ENCODE measurements at regions of chr11 and their contacts with region 1.

Region 1: DNA sequence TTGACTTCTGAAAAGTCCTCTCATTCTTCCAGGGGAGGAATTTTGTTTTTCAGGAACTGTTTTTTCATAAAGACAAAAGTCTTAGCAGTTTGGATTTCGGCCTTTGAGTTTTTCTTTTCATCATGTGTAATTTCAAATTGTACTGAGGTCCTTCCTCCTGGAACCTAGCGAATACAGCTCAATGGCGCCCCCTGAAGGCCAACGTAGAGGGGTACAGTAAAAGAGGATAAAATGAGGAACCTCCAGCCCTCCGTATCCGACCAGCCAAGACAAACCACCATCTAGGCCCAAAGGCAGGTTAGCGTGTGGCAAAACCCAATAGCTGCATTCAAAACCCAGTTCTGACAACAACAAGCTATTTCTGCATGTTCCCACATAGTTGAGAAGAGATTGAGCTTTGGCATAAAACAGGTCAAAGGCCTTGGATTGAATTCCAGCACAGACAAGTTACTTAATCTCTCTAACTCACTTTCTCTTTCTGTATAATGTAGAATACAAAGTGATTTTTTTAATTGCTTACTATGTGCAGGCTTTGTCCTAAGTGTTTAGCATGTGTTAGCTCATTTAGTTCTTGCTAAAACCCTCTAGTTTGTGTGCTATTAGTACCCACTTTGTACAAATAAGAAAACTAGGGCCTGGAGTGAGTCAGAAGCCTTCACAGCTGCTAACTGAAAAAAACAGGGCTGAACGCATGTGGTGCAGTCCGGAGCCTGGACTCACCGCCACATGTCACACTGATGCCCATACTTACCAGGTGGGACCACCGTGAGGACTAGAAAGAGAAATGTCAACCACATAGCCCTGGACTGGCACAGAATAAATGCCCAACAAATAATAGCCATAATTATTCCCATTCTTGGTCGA is 43.2 kb upstream of the ETS1 start:
- DNase-seq: peak; percentile 89 to 93
- ATAC-seq: peak; percentile 89 to 98 (median 92)
- H3K4me3 ChIP-seq: no peak overlapping the region
- H3K27ac ChIP-seq: no peak overlapping the region
- H3K4me1 ChIP-seq: peaks cover 10% of the 10 kb centered on the region
- H3K27me3 ChIP-seq: no peaks in the 10 kb centered on the region
- CTCF ChIP-seq: peak; percentile 92

Region 2: GRCh38 chr11:127993788-127994187 is 636.8 kb before region 1 on chr11:
- intact Hi-C with region 1: no loop called
- DNase-seq: no peak
- ATAC-seq: no peak
- H3K4me3 ChIP-seq: no peak overlapping the region
- H3K27ac ChIP-seq: no peak overlapping the region
- H3K4me1 ChIP-seq: no peaks in the 10 kb centered on the region
- H3K27me3 ChIP-seq: peaks cover 0 to 3% (median 2%) of the 10 kb centered on the region in 3 donors
- CTCF ChIP-seq: no peak

Region 3: DNA sequence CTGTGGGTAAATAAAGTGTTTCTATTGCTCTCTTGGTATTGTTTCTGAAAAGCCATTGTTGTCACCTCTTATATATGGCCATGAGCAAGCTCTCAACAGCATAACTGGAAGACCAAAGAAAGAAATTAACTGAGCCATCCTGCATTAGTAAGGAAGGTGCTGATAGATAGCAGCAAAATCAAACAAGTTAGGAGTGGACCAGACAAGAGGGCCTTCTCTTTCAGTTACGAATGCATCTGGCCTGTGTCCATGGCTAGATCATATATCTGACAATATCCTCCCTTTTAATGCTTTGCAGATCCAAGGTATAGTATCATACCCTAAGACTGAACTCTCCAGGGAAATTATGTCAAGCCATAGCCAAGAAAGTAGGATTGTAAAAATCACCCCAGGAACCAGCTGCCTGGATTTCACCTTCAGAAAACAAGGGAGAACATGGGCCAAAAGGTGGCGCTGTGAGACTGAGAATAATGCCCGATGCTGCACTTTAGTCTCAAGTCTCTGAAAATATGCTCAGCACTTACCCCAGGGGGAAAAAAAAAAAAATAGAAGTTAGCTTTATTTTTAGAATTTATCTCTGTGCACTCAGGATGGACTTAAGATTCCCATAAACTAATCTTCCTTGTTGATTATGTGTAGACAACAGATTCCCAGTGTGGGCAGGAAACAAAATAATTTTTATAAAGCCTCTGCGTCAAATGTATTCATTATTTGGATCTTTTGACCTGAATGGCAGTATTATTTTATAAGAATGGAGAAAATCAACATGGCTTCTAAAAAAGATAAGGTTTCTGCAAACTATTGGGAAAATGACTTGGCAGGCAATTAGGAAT is 458.3 kb before region 1 on chr11:
- intact Hi-C with region 1: loop called (anchors 5 kb)
- DNase-seq: peak; percentile 74 to 84
- ATAC-seq: peak in 3 of 4 donors; percentile 57 to 86 (median 65)
- H3K4me3 ChIP-seq: no peak overlapping the region
- H3K27ac ChIP-seq: no peak overlapping the region
- H3K4me1 ChIP-seq: no peaks in the 10 kb centered on the region
- H3K27me3 ChIP-seq: peaks cover 0 to 5% (median 4%) of the 10 kb centered on the region in 3 donors
- CTCF ChIP-seq: peak; percentile 76

Region 4: DNA sequence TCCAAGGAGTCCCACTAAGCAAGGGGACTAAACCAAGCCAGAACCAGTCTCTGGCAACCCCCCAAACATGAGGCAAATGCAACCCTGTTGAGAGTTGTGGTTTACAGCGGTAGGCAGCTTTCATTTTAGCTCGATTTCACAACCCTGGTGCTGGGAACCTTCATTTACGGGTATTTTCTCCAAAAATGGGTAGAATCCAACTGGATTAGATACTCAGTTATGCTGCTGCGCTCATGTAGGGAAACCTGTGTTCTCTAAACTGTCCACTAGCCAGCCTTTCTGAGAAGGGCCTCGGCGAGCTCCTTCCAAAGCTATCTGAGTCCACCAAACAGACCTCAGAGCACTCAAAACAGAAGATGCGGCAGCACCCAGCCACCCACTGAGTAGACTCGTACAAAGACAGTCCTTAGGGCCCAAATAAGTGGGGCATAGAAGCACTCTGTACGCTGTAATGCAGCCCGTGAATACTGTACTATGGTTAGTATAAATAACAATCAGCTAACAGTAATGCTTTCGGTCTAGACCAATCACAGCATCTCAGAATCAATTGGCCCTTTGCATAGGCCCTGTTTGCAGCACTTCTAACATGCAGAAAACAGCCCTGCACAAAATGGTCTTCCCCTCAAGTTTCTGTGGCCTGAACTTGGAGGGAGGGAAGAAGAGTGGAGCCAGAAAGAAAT is 147.9 kb before region 1 on chr11:
- intact Hi-C with region 1: loop called (anchors 5 kb)
- DNase-seq: peak; percentile 67 to 70
- ATAC-seq: peak; percentile 64 to 78 (median 73)
- H3K4me3 ChIP-seq: peak overlapping the region; percentile 45
- H3K27ac ChIP-seq: peak overlapping the region; percentile 57
- H3K4me1 ChIP-seq: peaks cover 39% of the 10 kb centered on the region
- H3K27me3 ChIP-seq: no peaks in the 10 kb centered on the region
- CTCF ChIP-seq: no peak

Region 5: DNA sequence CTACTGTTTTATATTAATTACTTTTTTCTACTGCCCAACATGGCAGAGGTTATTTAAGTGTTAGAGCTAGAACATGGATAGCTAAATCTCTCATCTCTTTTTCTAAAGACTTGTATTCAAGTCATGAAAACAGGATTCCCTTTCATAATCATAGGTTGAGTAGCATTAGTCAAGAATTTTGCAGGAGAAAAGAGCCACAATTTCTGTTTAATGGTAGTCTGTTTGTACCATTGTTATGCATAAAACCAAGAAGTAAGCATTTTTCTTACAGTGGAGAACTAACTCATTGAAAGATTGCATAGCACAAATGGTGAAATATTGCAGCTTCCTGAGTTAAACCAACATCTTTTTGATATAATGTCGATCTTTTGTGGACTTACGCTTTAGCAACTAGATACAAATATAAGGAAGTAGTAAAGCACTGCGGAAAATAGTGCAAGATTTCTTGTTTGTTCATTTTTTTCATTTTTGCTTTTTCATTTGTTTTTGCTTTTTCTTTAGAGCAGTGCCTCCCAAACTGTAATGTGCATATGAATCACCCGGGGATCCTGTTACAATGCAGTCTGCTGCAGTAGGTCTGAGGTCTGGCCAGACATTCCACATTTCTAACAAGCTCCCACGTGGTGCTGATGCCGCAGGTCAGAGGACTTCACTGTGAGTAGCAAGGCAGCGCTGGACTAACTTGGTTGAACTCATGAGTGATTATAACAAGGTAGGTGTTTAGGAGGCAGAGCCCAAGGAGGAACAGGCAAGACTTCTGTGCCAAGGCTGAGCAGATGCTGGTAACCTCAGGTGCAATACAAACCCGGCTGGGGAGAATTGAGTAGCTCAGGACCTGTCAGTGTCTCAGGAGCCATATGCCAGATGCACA is 47.9 kb before region 1 on chr11:
- intact Hi-C with region 1: no loop called
- DNase-seq: peak; percentile 27 to 62
- ATAC-seq: peak; percentile 88 to 99 (median 96)
- H3K4me3 ChIP-seq: no peak overlapping the region
- H3K27ac ChIP-seq: no peak overlapping the region
- H3K4me1 ChIP-seq: peaks cover 29% of the 10 kb centered on the region
- H3K27me3 ChIP-seq: peaks cover 0 to 10% (median 5%) of the 10 kb centered on the region in 3 donors
- CTCF ChIP-seq: no peak

Region 6: DNA sequence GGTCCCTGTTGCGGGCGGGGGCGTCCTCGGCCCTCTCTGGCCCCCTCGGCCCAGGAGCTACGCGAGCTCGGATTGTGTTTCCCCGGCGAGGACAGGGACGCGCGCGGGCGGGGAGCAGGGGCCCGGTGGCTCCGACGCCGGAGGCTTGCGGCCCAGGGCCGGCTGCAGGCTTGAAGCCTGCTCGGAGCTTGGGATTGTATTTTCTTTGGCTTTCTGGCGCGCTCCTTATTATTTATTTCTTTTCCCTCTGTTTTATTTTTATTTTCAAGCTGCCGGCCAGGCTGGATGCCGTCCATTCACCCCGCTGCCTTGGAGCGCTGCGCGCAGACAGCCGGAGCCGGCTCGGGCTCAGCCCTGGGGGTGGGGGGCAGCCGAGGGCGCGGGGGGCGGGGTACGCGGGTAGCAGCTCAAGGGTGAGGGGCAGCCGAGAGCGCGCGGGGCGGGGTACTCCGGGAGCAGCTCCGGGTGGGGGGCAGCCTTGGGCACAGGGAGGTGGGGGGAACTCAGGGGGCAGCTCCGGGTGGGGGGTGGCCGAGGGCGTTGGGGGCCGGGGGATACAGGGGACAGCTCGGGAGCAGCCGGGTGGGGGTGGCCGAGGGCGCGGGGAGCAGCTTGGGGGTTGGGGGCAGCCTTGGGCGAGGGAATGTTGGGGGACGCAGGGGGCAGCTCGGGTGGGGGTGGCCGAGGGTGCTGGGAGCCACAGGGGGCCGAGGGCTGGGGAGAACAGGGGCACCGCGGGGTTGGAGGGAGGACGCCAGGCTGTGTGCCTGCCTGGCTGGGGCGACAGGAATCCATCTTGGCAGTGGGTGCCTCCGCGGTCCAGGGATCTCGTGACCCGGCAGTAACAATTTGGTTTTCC is 193.8 kb after region 1 on chr11:
- intact Hi-C with region 1: loop called in 1 of 2 experiments (anchors 5 kb)
- DNase-seq: no peak
- ATAC-seq: no peak
- H3K4me3 ChIP-seq: peak overlapping the region; percentile 34
- H3K27ac ChIP-seq: no peak overlapping the region
- H3K4me1 ChIP-seq: no peaks in the 10 kb centered on the region
- H3K27me3 ChIP-seq: peaks cover 0 to 7% (median 0%) of the 10 kb centered on the region in 3 donors
- CTCF ChIP-seq: no peak